Cardiac septum (tissue), 1 donor: ENCODE measurements at regions of chr13 and their contacts with region 1.

Region 1: DNA sequence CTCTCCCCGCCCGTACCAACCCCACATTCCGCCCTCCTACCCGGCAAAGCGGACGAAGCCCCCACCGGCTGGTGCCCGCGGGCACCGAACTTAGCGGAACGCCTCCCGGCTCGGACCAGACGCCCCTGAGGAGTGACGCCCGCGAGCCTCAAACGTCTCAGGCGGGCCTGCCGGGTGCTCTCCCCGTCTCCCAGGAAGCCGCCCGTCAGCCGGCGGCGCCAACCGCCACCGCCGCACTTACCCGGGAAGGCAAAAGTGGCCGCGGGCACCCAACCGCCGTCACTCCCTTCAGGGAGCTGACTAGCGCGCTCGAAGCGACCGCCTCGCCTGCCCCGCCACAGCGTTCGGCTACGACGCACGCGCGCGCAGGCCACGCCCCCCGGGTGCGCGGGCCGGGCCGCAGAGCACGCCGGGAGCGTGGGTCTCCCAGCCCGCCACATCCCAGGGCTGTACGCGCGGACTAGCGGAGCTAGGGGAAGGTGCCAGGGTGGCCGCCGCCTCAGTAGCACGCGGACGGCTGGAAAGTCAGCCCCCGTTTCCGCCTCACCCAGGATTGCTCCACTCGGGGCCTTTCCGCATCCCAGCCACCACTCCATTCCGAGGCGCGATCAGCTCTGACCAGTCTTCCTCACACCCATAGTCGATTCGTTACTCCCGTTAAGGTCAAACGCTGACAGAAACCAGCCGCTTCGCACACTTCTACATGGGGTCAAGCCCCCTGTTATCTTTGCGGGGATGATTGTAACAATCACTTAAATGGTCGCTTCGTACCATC is at the start of gene TEX30:
- DNase-seq: peak; percentile 91
- total RNA-seq, gene TEX30: 5.9 TPM

Region 2: GRCh38 chr13:102596147-102597028 is 177.2 kb before region 1 on chr13 and contains the start of gene TPP2:
- intact Hi-C with region 1: loop called (anchors 2 kb)
- DNase-seq: peak; percentile 100
- total RNA-seq, gene TPP2: 31.0 TPM

Region 3: DNA sequence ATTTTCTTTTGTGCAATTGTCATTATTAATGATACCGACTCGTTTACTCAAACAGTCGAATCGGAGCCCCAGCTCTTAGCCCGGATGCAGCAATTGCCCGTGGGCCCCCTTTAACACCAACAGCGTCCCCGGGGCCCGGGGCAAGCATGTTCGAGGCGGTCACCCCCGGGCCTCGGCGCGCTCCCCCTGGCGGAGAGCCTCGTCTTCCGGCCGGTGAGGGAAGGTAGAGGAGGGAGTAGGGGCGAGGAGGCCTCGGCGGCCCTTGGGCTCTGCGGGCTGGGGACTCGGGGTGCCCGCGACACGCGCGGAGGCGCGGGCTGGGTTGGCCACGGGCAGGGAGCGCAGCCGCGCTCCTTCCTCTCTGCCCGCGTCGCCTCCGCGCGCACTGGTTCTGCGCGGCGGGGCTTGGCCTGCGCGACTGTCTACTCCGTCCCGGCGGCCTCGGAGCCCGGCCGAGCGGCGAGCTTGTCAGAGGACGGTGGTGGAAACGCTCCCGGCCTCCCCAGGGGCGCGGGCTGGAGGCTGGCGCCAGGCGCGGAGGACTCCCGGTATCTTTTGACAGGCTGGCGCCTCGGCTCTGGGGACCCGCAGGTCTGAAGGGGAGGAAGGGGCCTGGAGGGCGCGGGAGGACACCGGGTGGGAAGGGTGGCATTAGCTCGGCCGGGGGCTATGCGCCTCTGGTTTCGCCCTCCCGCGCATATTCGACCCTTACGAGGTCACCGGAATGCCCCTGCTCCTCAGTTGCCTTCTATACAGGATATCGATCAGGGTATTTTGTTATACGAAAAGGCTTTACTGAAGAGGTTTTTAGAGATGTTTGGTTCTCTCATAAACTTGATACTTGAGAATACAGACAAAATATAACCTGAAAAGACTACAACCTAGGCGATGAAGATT is 26.8 kb after region 1 on chr13:
- intact Hi-C with region 1: loop called (anchors 1 kb)
- DNase-seq: peak; percentile 87